Activated B cell treated with CpG ODN at 0.5 μM for 24 hours (primary cell): ENCODE measurements at regions of chr6 and their contacts with region 1.

Region 1: DNA sequence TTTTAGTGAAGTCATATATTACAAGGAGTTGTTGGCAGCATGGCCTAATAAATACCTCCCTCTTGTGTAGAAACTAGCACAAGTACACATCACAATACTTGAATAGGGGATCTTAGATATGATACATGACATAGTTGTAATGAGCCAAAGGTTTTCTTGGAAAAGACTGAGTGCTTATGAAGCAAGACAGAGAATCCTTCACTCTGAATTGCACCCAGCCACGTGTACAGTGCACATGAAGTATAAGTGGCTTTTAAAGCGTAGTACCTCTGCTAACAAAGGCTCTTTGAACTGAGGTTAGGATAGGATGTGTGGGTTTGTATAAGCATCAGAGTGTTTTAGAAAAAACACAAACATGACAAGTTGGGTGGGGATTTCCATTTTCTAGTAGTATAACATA is 145.5 kb upstream of the STMND1 start:
- DNase-seq: no peak
- ATAC-seq: no peak
- H3K4me3 Mint-ChIP-seq: no peak overlapping the region
- H3K27ac Mint-ChIP-seq: no peak overlapping the region
- H3K4me1 Mint-ChIP-seq: no peaks in the 10 kb centered on the region
- H3K27me3 Mint-ChIP-seq: peaks cover 8% of the 10 kb centered on the region
- CTCF ChIP-seq: no peak

Region 2: DNA sequence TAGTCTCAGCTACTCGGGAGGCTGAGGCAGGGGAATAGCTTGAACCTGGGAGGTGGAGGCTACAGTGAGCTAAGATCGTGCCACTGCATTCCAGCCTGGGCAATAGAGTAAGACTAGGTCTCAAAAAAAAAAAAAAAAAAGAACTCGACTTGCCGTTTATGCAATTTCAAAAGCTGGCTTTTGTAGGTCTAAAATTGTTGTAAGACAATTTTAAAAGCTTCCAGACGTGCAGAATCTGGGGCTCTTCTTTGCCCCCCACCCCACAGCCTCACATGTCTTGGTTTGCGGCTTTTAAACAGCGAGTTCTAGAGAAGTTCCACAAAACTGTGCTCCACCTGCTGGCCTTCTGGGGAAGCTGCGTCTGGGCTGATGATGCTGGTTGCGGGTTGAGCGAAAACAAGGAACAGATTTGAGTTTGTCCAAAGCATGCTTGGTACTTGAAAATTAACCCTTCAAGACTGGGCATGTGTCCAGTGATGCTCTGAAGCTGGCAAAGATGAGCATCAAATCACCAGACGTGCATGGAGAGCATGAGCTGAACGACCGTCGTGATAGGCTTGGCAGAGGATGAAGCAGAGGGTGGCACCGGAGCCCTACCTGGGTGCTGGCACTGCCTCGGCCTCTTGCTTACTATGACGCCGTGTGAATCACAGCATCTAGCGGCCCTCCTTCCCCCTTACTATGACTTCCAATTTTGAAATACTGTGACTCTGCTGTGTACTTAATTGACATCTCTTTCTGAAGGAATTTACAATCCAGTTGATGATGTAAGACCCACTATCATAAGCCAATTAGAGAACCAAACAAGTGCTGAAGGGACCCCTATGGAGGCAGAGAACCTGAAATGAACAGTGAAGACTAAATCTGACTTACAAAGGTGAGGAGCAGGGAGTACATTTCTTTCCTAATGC is 546.6 kb before region 1 on chr6:
- CTCF ChIA-PET with region 1: no interaction called
- POLR2A ChIA-PET with region 1: no interaction called
- intact Hi-C with region 1: loop called (anchors 10 kb)
- DNase-seq: peak; percentile 32
- ATAC-seq: peak; percentile 60
- H3K4me3 Mint-ChIP-seq: peak overlapping the region; percentile 63
- H3K27ac Mint-ChIP-seq: peak overlapping the region; percentile 37
- H3K4me1 Mint-ChIP-seq: peaks cover 66% of the 10 kb centered on the region
- H3K27me3 Mint-ChIP-seq: no peaks in the 10 kb centered on the region
- CTCF ChIP-seq: no peak